ENCODE measurements at regions of chr5 and their contacts with region 1.

Region 1: GRCh38 chr5:129781594-129781993 is 33.7 kb downstream of the MINAR2 start:
- ATAC-seq: no peak
- H3K4me3 ChIP-seq: no peak overlapping the region
- H3K27ac ChIP-seq: no peak overlapping the region
- H3K4me1 ChIP-seq: no peaks in the 10 kb centered on the region

Region 2: DNA sequence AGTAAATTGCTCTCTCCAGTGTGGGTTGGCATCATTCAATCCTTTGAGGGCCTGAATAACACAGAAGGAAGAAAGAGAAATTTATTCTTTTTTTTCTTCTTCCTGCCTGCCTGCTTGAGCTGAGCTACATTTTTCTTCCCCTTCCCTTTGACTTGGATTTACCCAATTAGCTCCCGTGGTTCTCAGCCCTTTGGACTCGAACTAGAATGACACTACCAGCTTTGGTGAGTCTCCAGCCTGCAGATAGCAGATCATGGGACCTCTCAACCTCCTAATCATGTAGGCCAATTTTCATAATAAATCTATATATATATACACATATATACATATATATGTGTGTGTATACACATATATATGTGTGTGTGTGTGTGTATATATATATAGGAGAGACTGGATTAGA is 558.4 kb before region 1 on chr5:
- in situ Hi-C with region 1: no loop called
- ATAC-seq: no peak
- H3K4me3 ChIP-seq: no peak overlapping the region
- H3K27ac ChIP-seq: no peak overlapping the region
- H3K4me1 ChIP-seq: no peaks in the 10 kb centered on the region

Region 3: GRCh38 chr5:129836321-129836720 is 54.7 kb after region 1 on chr5:
- in situ Hi-C with region 1: loop called in 1 of 9 experiments (anchors 5 kb)
- ATAC-seq: peak in 1 of 8 experiments; percentile 34
- H3K4me3 ChIP-seq: no peak overlapping the region
- H3K27ac ChIP-seq: no peak overlapping the region
- H3K4me1 ChIP-seq: no peaks in the 10 kb centered on the region

Region 4: GRCh38 chr5:129884322-129884721 is 102.7 kb after region 1 on chr5:
- in situ Hi-C with region 1: no loop called
- ATAC-seq: peak in 3 of 8 experiments; percentile 37 to 97 (median 81)
- H3K4me3 ChIP-seq: no peak overlapping the region
- H3K27ac ChIP-seq: no peak overlapping the region
- H3K4me1 ChIP-seq: no peaks in the 10 kb centered on the region